Left cardiac atrium (tissue), 4 donors: ENCODE measurements at regions of chr5 and their contacts with region 1.

Region 1: GRCh38 chr5:124754206-124754927 is 7.9 kb upstream of the ZNF608 start:
- DNase-seq: no peak
- ATAC-seq: no peak

Region 2: GRCh38 chr5:124519396-124519795 is 235.0 kb before region 1 on chr5:
- intact Hi-C with region 1: no loop called
- DNase-seq: peak; percentile 40
- ATAC-seq: peak; percentile 80 to 92

Region 3: GRCh38 chr5:124741711-124742496 is 12.5 kb before region 1 on chr5:
- intact Hi-C with region 1: no loop called
- DNase-seq: no peak
- ATAC-seq: peak; percentile 9 to 48

Region 4: DNA sequence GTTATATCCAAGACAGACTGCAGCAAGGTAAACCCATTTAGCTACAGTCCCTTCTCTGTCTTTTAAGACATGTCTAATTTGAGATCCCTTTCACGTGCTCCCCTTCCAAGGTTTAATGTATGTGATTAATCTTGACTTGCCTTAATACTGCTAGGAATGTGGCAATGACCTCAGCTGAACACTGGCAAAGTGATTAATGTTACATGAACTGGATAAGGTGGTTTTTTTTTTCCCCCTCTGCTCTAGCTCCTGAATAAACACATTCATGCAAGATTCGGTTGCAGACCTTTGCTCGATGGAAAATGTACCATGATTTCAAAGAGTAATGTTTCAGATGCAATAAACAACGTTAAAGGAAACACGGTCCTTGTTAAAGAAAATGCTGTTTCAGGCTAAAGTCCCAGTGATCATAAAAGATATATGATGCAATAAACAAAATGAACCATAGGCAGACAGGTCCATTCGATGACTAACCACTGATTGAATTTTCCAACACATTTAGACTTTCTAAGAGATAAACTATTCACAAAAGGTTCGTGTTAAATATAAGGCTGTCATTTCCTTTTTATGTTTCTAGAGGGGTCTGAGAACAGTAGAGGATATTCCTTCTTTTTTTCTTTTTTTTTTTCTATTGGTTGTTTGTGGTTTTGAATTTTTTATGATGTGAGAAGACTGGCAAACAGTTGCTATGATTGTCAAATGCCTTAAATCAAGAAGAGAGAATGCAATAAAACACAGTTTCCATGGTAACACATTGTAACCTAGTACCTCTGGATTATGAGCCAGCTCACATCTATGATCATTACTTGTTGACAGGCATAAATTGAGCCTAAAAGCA is 36.7 kb after region 1 on chr5:
- intact Hi-C with region 1: loop called in 1 of 2 experiments (anchors 5 kb)
- DNase-seq: no peak
- ATAC-seq: no peak

Region 5: DNA sequence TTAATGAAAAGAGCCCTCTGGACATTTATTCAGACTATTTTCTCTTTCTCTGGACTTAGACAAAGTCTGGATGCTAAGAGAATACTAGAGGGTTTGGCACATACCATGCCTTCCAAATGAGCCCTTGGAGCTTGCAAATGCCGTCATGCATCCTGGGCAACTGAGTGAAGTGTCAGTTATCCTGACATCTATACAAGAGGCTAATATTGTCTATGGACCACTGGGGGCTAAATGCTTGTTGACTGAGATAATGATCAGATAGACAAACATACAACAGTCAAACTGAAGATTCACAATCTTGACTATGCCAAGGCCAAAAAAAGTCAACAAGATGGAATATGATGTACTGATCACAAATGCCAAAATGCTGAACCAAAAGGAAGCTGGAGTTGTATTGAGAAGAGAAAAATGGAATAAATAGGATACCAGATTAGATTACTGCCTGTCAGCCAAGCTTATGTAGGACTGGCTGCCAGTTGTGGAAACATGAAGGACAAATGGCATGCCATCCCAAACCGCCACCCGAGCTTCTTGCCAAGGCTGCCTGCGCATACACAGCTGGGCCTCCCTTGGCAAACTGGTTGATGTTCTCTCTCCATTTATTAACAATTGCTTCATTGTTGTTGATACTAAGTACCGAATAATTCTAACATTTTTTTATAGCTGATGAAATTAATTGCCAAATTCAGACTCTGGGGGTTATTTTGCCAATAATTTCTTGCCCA is 1428.8 kb after region 1 on chr5:
- intact Hi-C with region 1: no loop called
- DNase-seq: peak; percentile 32
- ATAC-seq: no peak